Gastrocnemius medialis (tissue), 4 donors: ENCODE measurements at regions of chr14 and their contacts with region 1.

Region 1: DNA sequence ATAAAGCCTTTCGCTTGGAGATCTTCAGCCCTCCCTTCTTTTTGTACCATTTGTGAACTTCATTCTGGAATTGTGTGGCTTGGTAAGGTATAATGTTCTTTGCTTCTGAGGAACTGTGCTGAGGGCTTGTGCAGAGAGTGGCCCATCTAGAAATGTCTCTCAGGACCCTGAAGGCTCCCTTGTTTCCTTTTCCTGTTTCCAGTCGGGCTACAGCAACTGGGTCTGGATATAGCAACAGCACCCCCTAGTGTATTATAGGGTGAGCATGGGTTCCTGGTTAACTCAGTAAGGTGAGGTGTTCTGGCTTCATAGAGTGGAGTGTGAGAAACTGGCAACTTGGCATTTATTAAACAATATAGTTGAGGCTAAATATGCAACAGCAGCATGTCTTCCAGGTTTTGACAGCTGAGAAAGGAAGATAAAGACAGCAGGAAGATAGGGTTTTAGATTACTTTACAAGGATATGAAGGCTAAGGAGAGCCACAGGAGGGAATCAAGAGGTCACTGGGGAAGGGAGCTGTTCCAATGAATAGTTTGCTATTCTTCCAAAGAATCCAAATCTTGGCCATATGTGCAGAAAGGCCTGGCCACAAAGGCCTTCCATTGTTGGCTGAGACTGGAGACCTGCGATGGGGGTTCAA is 49.1 kb upstream of the RNU6-8 start:
- DNase-seq: peak; percentile 40 to 45
- ATAC-seq: peak; percentile 85 to 93
- H3K4me3 ChIP-seq: no peak overlapping the region
- H3K27ac ChIP-seq: peak overlapping the region in 1 of 4 donors; percentile 40
- H3K4me1 ChIP-seq: peaks cover 7 to 15% of the 10 kb centered on the region in 2 donors
- H3K27me3 ChIP-seq: no peaks in the 10 kb centered on the region
- CTCF ChIP-seq: peak; percentile 50 to 89 (median 79)
- POLR2A ChIP-seq: no peak

Region 2: DNA sequence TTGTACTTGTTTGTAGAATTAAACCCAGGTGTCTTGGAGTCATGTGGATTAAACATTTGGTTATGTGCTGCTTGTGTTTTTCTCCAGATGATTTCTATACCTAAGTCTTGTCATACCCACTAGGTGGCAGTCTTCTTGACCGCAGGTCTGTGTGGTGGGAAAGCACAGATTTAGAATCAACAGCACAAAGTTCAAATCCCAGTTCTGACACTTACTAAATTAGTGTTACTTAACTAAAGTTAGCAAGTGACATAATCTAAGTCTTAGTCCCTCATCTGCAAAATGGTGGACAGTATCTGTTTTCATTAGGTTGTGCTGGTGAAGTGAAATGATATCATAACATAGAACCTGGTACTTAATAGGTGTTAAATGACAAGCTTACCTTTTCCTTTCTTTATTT is 326.0 kb before region 1 on chr14:
- in situ Hi-C with region 1: loop called (anchors 5 to 10 kb)
- intact Hi-C with region 1: loop called (anchors 2 kb)
- DNase-seq: no peak
- ATAC-seq: no peak
- H3K4me3 ChIP-seq: no peak overlapping the region
- H3K27ac ChIP-seq: peak overlapping the region in 3 of 4 donors; percentile 69 to 74 (median 70)
- H3K4me1 ChIP-seq: peaks cover 18 to 23% of the 10 kb centered on the region in 2 donors
- H3K27me3 ChIP-seq: no peaks in the 10 kb centered on the region
- CTCF ChIP-seq: peak in 4 of 5 experiments; percentile 31 to 53 (median 40)
- POLR2A ChIP-seq: no peak

Region 3: GRCh38 chr14:32064931-32065330 is 187.2 kb before region 1 on chr14:
- in situ Hi-C with region 1: loop called (anchors 5 to 10 kb)
- intact Hi-C with region 1: no loop called
- DNase-seq: no peak
- ATAC-seq: no peak
- H3K4me3 ChIP-seq: no peak overlapping the region
- H3K27ac ChIP-seq: no peak overlapping the region
- H3K4me1 ChIP-seq: no peaks in the 10 kb centered on the region
- H3K27me3 ChIP-seq: no peaks in the 10 kb centered on the region
- CTCF ChIP-seq: no peak
- POLR2A ChIP-seq: no peak

Region 4: GRCh38 chr14:32202998-32203882 is 48.9 kb before region 1 on chr14 and contains the start of gene RNU6-8:
- in situ Hi-C with region 1: no loop called
- intact Hi-C with region 1: loop called (anchors 5 kb)
- DNase-seq: peak; percentile 82 to 91
- ATAC-seq: peak; percentile 72 to 76
- H3K4me3 ChIP-seq: peak within 1 kb of the TSS; percentile 81 to 95 (median 84)
- H3K27ac ChIP-seq: peak within 1 kb of the TSS; percentile 87 to 96 (median 92)
- H3K4me1 ChIP-seq: peaks cover 11 to 17% of the 10 kb centered on the region in 2 donors
- H3K27me3 ChIP-seq: no peaks in the 10 kb centered on the region
- CTCF ChIP-seq: no peak
- POLR2A ChIP-seq: peak; percentile 84 to 88
- total RNA-seq, gene RNU6-8: not detected

Region 5: DNA sequence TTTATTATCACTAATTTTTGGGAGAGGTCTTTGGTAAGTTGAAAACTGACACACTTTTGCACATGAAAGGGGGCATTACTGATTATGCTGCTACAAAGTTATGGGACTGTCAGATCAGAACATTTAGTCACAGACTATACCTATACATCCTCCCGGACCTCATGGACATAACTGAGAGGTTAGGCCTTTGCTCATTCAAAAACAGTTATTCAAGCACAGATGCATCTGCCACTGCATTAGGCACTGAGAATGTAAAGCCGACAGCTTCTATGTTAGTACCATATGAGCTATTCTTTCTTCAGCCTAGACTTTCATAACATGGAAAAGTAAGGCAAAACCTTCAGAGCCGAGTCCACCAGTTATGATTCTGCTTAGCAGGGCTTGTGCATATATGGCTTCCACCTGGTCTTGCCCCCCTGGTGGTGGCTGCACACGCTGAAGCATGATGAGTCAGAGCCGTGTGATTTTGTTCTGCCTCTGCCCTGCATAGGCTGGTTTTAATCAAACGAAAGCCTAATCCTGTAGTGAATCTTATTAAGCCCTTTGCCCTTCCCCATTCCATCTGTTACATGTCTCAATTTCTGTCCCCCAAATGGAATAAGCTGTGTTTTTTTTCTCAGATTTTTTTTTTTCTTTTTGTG is 27.3 kb before region 1 on chr14:
- in situ Hi-C with region 1: no loop called
- intact Hi-C with region 1: no loop called
- DNase-seq: peak; percentile 35 to 64
- ATAC-seq: peak; percentile 92 to 98
- H3K4me3 ChIP-seq: no peak overlapping the region
- H3K27ac ChIP-seq: peak overlapping the region; percentile 51 to 70 (median 58)
- H3K4me1 ChIP-seq: peaks cover 3 to 21% of the 10 kb centered on the region in 2 donors
- H3K27me3 ChIP-seq: no peaks in the 10 kb centered on the region
- CTCF ChIP-seq: peak; percentile 23 to 66 (median 47)
- POLR2A ChIP-seq: no peak

Region 6: GRCh38 chr14:32286602-32287001 is 34.5 kb after region 1 on chr14:
- in situ Hi-C with region 1: no loop called
- intact Hi-C with region 1: no loop called
- DNase-seq: no peak
- ATAC-seq: no peak
- H3K4me3 ChIP-seq: no peak overlapping the region
- H3K27ac ChIP-seq: no peak overlapping the region
- H3K4me1 ChIP-seq: no peaks in the 10 kb centered on the region
- H3K27me3 ChIP-seq: no peaks in the 10 kb centered on the region
- CTCF ChIP-seq: no peak
- POLR2A ChIP-seq: no peak

Region 7: GRCh38 chr14:32560209-32560857 is 308.2 kb after region 1 on chr14:
- in situ Hi-C with region 1: loop called in 2 of 4 experiments (anchors 10 to 25 kb)
- intact Hi-C with region 1: loop called (anchors 5 kb)
- DNase-seq: peak; percentile 45 to 51
- ATAC-seq: peak; percentile 80 to 94
- H3K4me3 ChIP-seq: no peak overlapping the region
- H3K27ac ChIP-seq: peak overlapping the region in 2 of 4 donors; percentile 8 to 14
- H3K4me1 ChIP-seq: peaks cover 34 to 48% of the 10 kb centered on the region in 2 donors
- H3K27me3 ChIP-seq: no peaks in the 10 kb centered on the region
- CTCF ChIP-seq: peak; percentile 62 to 92 (median 87)
- POLR2A ChIP-seq: no peak